Mammary epithelial cell (primary cell): ENCODE measurements at regions of chrX and their contacts with region 1.

Region 1: GRCh38 chrX:29388509-29388908 is 801.3 kb downstream of the IL1RAPL1 start:
- DNase-seq: no peak
- H3K4me3 ChIP-seq: no peak overlapping the region
- H3K27ac ChIP-seq: no peak overlapping the region
- H3K4me1 ChIP-seq: no peaks in the 10 kb centered on the region
- H3K27me3 ChIP-seq: no peaks in the 10 kb centered on the region
- CTCF ChIP-seq: no peak

Region 2: GRCh38 chrX:29295987-29296680 is 92.4 kb before region 1 on chrX:
- CTCF ChIA-PET with region 1: no interaction called
- dilution Hi-C with region 1: loop called (anchors 5 kb)
- in situ Hi-C with region 1: no loop called
- intact Hi-C with region 1: no loop called
- DNase-seq: peak; percentile 3
- H3K4me3 ChIP-seq: no peak overlapping the region
- H3K27ac ChIP-seq: no peak overlapping the region
- H3K4me1 ChIP-seq: no peaks in the 10 kb centered on the region
- H3K27me3 ChIP-seq: no peaks in the 10 kb centered on the region
- CTCF ChIP-seq: no peak

Region 3: GRCh38 chrX:31366041-31366440 is 1977.5 kb after region 1 on chrX:
- CTCF ChIA-PET with region 1: no interaction called
- dilution Hi-C with region 1: no loop called
- in situ Hi-C with region 1: no loop called
- intact Hi-C with region 1: no loop called
- DNase-seq: no peak
- H3K4me3 ChIP-seq: no peak overlapping the region
- H3K27ac ChIP-seq: no peak overlapping the region
- H3K4me1 ChIP-seq: peaks cover 5% of the 10 kb centered on the region
- H3K27me3 ChIP-seq: no peaks in the 10 kb centered on the region
- CTCF ChIP-seq: no peak